Panc1 (cell line): ENCODE measurements at regions of chr1 and their contacts with region 1.

Region 1: DNA sequence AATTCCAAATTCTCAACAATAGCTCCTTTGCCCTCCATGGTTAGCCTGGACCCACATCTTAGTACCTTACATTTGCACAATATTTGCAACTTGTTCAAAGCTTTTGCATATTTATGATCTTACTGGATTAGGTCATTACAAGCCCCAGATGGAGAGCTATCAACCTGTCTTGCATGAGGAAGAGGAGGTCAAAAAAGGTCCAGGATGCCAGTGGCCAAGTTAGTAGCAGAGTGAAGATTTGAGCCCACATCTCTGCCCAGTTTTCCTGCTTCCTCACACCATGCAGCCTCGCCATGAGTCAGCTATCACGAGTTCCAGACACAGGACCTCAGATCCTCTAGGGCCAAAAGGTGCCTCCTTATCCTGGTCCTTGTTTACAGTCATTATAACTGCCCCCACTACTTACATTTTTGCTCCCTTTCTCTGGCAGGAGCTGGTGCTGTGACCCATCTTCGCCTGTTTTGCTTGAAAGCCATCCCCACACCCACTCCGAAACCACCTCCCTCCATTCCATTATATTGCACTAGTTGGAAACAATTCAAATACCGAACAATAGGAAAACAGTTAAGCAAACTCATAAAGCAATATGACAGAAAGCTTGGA is 5.0 kb upstream of the AHCYL1 start:
- DNase-seq: peak; percentile 52
- ATAC-seq: peak; percentile 69
- H3K4me3 ChIP-seq: no peak overlapping the region
- H3K27ac ChIP-seq: peak overlapping the region; percentile 95
- H3K4me1 ChIP-seq: peaks cover 55% of the 10 kb centered on the region
- H3K27me3 ChIP-seq: no peaks in the 10 kb centered on the region
- CTCF ChIP-seq: no peak

Region 2: GRCh38 chr1:109877776-109878175 is 101.8 kb before region 1 on chr1:
- CTCF ChIA-PET with region 1: no interaction called
- POLR2A ChIA-PET with region 1: no interaction called
- in situ Hi-C with region 1: no loop called
- intact Hi-C with region 1: no loop called
- DNase-seq: no peak
- ATAC-seq: no peak
- H3K4me3 ChIP-seq: no peak overlapping the region
- H3K27ac ChIP-seq: peak overlapping the region; percentile 89
- H3K4me1 ChIP-seq: peaks cover 63% of the 10 kb centered on the region
- H3K27me3 ChIP-seq: no peaks in the 10 kb centered on the region
- CTCF ChIP-seq: no peak

Region 3: DNA sequence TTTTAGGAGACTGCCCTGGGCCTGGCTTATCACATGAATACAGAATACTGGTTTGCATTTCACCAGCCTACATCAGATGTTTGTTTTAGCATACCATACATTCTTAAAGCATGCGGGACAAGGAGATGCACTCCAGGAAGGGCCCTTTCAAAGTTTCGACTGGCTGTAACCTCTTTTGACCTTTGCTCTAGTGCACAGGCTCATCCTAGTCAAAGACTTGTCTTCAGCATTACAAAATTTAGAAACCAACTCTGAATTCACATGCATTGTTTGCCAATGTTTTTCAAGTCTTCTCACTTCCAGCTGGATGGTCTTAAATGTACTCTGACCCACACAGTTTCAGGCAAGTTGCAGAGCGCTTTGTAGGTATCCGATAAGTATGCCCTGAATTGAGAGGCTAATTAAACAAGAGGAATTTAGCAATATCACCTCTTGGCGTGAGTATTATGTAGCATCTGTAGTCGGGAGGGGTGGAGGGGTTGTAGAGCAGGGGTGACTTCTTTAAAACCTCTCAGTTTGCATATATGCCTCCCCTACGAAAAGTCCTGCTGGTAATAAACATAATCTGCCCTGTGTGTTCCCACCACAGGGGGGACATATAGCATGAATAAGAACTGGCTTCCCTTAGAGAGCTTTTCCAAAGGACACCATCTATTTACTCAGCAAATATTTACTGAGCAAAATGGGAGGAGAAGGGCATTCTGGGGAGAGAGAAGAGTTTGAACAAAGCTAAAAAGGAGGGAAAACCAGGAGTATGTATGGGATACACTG is 19.4 kb before region 1 on chr1:
- CTCF ChIA-PET with region 1: interaction called, 16 read pairs
- POLR2A ChIA-PET with region 1: interaction called, 11 read pairs
- in situ Hi-C with region 1: no loop called
- intact Hi-C with region 1: no loop called
- DNase-seq: peak; percentile 89
- ATAC-seq: peak; percentile 95
- H3K4me3 ChIP-seq: peak overlapping the region in 1 of 2 experiments; percentile 19; a peak in 1 of 4 replicates
- H3K27ac ChIP-seq: peak overlapping the region; percentile 100
- H3K4me1 ChIP-seq: peaks cover 47% of the 10 kb centered on the region
- H3K27me3 ChIP-seq: no peaks in the 10 kb centered on the region
- CTCF ChIP-seq: peak; percentile 32

Region 4: DNA sequence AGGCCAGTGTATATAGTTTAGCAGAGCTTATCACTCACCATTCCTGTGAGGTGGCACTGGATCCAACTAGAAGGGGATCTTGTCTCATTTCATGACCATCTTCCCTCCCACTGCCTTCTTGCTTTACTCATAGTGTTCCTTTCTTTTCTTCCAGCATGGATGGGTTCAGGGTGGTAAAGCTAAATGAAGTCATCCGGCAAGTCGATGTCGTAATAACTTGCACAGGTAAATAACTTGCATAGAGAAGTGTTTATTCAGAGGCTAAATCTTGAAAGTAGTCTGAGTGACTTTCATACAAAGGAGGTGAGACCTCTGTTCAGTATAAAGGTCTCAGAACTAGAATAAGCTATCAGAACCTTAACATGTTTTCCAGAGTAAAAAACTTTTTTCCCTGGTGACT is 38.2 kb after region 1 on chr1:
- CTCF ChIA-PET with region 1: no interaction called
- POLR2A ChIA-PET with region 1: no interaction called
- in situ Hi-C with region 1: no loop called
- intact Hi-C with region 1: no loop called
- DNase-seq: no peak
- ATAC-seq: no peak
- H3K4me3 ChIP-seq: no peak overlapping the region
- H3K27ac ChIP-seq: no peak overlapping the region
- H3K4me1 ChIP-seq: no peaks in the 10 kb centered on the region
- H3K27me3 ChIP-seq: no peaks in the 10 kb centered on the region
- CTCF ChIP-seq: no peak